Activated CD4-positive, alpha-beta T cell treated with anti-CD3 and anti-CD28 coated beads, Interleukin-2, amount 10 ng/mL, durations not matched to agents 24 days and 14 days (primary cell): ENCODE measurements at regions of chr16 and their contacts with region 1.

Region 1: GRCh38 chr16:50741808-50742575 is at the start of gene CYLD:
- DNase-seq: peak; percentile 100
- H3K4me3 Mint-ChIP-seq: peak within 1 kb of the TSS; percentile 95
- H3K27ac Mint-ChIP-seq: peak within 1 kb of the TSS; percentile 96
- H3K4me1 Mint-ChIP-seq: peaks cover 51% of the 10 kb centered on the region
- H3K27me3 Mint-ChIP-seq: no peaks in the 10 kb centered on the region
- total RNA-seq, gene CYLD: 178 TPM in 2 replicates

Region 2: DNA sequence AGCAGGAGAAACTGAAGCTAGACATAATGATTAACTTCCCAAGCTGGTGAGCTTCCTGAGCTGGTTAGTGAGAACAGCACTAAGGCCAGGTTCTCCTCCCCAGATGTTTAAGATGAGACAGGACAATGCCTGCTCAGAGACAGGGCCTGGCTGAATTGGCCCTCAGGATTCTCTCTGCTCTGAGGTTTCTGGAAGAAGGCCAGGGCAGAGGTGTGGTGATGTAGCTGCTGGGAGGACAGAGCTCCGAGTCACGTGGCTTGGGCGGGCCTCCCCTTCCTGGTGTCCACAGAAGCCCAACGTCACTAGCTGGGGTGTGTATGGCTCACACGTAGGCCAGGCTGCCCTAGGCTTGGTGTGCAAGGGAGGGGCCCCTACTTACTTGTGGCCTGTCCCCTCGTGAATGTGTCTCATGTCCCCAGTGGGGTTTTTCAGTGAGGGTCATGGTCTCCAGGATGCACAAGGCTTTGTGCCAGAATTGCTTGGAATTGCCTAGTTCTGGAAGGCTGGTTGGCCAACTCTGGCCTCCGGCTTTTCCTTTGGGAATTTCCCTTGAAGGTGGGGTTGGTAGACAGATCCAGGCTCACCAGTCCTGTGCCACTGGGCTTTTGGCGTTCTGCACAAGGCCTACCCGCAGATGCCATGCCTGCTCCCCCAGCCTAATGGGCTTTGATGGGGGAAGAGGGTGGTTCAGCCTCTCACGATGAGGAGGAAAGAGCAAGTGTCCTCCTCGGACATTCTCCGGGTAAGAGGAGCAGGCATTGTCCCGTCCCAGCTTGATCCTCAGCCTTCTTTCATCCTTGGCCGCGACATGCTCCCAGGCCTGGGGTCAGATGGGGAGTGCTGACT is 45.2 kb before region 1 on chr16:
- intact Hi-C with region 1: loop called (anchors 1 kb)
- DNase-seq: peak; percentile 72
- H3K4me3 Mint-ChIP-seq: peak overlapping the region; percentile 81
- H3K27ac Mint-ChIP-seq: peak overlapping the region; percentile 29
- H3K4me1 Mint-ChIP-seq: peaks cover 70% of the 10 kb centered on the region
- H3K27me3 Mint-ChIP-seq: peaks cover 5% of the 10 kb centered on the region